PC-9 (cell line): ENCODE measurements at regions of chr18 and their contacts with region 1.

Region 1: DNA sequence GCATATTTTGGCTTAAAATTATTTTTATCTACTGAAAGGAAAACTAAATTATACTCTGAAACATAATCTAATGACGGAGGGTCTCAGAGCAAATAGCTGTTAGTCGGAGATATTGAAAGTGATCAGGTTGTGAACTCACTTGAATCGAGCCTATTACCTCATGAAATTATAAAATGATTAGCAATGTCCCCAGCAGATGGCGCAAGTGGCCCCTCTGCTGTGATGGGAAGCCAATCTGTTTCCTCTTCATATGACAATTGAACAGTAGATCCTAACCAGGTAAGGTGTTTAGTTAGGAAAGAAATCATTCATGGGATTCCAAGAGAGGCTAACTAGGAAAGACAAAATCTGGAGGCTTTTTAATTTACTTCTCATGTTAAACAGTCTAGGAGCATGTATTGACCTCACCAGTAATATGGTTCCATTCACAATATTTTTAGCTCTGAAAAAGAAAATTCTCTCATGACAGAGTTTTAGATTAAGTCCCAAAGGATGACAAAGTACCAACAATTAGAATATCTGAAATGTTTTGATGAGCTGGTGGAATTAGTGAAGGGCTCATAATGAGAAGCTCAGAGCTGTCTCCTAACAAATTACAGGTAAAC is 29.9 kb upstream of the MPPE1 start:
- DNase-seq: peak; percentile 61 to 70
- H3K4me3 ChIP-seq: no peak overlapping the region
- H3K27ac ChIP-seq: no peak overlapping the region
- H3K4me1 ChIP-seq: no peaks in the 10 kb centered on the region
- H3K27me3 ChIP-seq: no peaks in the 10 kb centered on the region
- CTCF ChIP-seq: peak; percentile 85

Region 2: DNA sequence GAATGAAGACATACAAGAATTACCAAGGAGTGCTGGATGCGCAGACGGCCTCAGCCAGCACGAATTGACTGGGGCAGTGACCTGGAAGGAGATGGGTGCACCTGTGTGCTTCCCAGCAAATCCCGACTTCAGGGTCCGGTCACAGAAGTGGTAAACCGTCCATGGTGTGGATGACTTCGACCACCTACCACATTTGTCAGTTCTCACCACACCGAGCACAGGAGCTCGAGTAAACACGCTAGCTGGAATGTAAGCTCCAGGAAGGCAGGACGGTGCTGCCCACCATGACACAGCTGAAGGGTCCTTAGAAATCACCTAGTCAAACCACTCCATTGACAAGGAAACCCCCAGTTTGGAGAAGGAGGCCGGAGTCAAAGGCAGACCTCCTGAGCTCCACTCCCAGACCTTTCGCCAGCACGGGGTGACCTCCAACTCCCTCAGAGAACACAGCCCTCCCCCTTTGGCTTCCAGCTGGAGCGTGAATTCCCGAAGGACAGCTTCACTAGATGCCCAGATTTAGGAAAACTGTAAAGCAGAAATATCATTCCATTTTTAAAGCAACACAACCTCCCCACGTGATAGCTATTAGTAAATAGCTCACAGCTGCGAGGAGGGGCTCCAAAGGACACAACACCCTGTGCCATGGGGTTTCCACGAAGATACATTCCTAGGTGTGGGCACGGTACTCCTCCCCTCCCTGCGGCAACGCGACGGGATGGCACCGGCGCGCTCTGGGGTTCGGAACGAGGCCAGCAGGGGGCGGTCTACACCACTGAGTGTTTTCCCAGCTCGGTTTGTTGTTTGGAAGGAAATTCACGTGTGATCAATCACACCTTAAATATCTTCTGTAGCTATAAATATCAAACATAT is 283.0 kb before region 1 on chr18:
- CTCF ChIA-PET with region 1: no interaction called
- POLR2A ChIA-PET with region 1: no interaction called
- intact Hi-C with region 1: loop called (anchors 1 kb)
- DNase-seq: peak in 1 of 2 experiments; percentile 49
- H3K4me3 ChIP-seq: no peak overlapping the region
- H3K27ac ChIP-seq: no peak overlapping the region
- H3K4me1 ChIP-seq: no peaks in the 10 kb centered on the region
- H3K27me3 ChIP-seq: peaks cover 87% of the 10 kb centered on the region
- CTCF ChIP-seq: peak; percentile 73

Region 3: GRCh38 chr18:11741505-11742145 is 196.4 kb before region 1 on chr18:
- CTCF ChIA-PET with region 1: interaction called, 12 read pairs
- POLR2A ChIA-PET with region 1: interaction called, 5 read pairs
- intact Hi-C with region 1: no loop called
- DNase-seq: no peak
- H3K4me3 ChIP-seq: no peak overlapping the region
- H3K27ac ChIP-seq: no peak overlapping the region
- H3K4me1 ChIP-seq: no peaks in the 10 kb centered on the region
- H3K27me3 ChIP-seq: peaks cover 55% of the 10 kb centered on the region
- CTCF ChIP-seq: peak; percentile 63

Region 4: GRCh38 chr18:11785458-11786055 is 152.4 kb before region 1 on chr18:
- CTCF ChIA-PET with region 1: interaction called, 10 read pairs
- POLR2A ChIA-PET with region 1: no interaction called
- intact Hi-C with region 1: no loop called
- DNase-seq: no peak
- H3K4me3 ChIP-seq: no peak overlapping the region
- H3K27ac ChIP-seq: no peak overlapping the region
- H3K4me1 ChIP-seq: no peaks in the 10 kb centered on the region
- H3K27me3 ChIP-seq: no peaks in the 10 kb centered on the region
- CTCF ChIP-seq: no peak

Region 5: DNA sequence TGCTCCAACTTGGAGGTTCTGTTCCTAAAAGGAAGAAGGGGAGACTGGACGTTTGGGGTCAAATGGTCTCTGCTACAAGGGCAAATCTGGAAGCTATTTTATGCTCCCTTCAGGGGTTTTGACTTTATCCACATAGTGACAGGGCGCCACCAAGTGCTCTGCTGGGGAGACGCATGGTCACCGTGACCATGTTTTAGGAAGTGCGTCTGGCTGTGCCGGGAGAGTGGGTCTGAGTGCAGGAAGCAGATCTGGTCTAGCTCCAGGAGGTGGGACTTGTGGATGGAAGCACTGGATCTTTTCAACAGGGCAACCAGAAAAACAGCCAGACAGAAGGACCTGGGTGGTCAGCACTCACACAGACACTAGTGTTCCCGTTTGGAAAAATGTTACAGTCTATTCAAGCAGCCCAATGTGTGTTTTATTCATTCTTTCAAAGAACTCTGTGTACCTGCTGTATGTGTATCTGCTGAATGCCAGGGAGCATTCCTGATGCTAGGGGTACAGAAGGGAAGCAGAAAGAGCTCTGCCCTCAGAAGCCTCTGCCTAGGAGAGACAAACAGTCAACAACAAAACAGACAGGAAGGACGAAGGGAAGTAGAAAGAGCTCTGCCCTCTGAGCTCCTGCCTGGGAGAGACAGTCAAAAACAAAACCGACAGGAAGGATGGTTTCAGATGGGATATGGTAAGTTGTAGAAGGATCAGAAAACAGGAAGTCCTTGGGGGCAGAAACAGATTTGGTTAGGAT is 57.6 kb after region 1 on chr18:
- CTCF ChIA-PET with region 1: interaction called, 41 read pairs
- POLR2A ChIA-PET with region 1: interaction called, 6 read pairs
- intact Hi-C with region 1: loop called (anchors 1 kb)
- DNase-seq: peak; percentile 49 to 70
- H3K4me3 ChIP-seq: no peak overlapping the region
- H3K27ac ChIP-seq: no peak overlapping the region
- H3K4me1 ChIP-seq: peaks cover 17% of the 10 kb centered on the region
- H3K27me3 ChIP-seq: no peaks in the 10 kb centered on the region
- CTCF ChIP-seq: peak; percentile 84

Region 6: GRCh38 chr18:12038639-12039417 is 100.9 kb after region 1 on chr18:
- CTCF ChIA-PET with region 1: interaction called, 11 read pairs
- POLR2A ChIA-PET with region 1: no interaction called
- intact Hi-C with region 1: loop called (anchors 1 kb)
- DNase-seq: peak; percentile 57 to 84
- H3K4me3 ChIP-seq: peak overlapping the region; percentile 60
- H3K27ac ChIP-seq: no peak overlapping the region
- H3K4me1 ChIP-seq: 0 out of 2 replicates have a peak, but pooled peaks cover 3% of the 10 kb centered on the region
- H3K27me3 ChIP-seq: no peaks in the 10 kb centered on the region
- CTCF ChIP-seq: peak; percentile 97